CD8-positive, alpha-beta memory T cell (primary cell): ENCODE measurements at regions of chr7 and their contacts with region 1.

Region 1: DNA sequence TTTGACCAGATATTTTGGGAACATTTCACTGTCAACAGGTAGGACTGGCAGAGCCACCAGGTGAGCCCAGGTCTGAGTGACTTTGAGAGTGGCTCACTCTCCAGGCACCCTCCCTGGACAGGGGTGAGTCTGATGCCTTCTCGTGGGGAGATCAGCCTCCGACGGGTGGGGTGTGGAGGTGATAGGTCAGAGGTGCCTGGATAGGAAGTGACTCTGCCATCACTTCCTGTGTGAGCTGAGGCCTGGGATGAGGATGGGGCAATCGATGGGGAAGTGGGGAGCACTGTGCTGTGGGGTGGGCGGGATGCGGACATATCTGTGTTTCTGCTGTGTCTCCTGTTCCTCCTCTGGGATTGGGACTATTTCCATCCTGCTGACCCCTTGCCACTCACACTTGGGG is 34.6 kb downstream of the IFT22 start:
- DNase-seq: no peak
- H3K4me3 ChIP-seq: no peak overlapping the region
- H3K4me3 Mint-ChIP-seq: no peak overlapping the region
- H3K27ac ChIP-seq: no peak overlapping the region
- H3K27ac Mint-ChIP-seq: no peak overlapping the region
- H3K4me1 ChIP-seq: peaks cover 3% of the 10 kb centered on the region
- H3K4me1 Mint-ChIP-seq: peaks cover 21 to 23% (median 22%) of the 10 kb centered on the region in 3 donors
- H3K27me3 ChIP-seq: peaks cover 3% of the 10 kb centered on the region
- H3K27me3 Mint-ChIP-seq: peaks cover 7 to 9% of the 10 kb centered on the region in 2 donors

Region 2: DNA sequence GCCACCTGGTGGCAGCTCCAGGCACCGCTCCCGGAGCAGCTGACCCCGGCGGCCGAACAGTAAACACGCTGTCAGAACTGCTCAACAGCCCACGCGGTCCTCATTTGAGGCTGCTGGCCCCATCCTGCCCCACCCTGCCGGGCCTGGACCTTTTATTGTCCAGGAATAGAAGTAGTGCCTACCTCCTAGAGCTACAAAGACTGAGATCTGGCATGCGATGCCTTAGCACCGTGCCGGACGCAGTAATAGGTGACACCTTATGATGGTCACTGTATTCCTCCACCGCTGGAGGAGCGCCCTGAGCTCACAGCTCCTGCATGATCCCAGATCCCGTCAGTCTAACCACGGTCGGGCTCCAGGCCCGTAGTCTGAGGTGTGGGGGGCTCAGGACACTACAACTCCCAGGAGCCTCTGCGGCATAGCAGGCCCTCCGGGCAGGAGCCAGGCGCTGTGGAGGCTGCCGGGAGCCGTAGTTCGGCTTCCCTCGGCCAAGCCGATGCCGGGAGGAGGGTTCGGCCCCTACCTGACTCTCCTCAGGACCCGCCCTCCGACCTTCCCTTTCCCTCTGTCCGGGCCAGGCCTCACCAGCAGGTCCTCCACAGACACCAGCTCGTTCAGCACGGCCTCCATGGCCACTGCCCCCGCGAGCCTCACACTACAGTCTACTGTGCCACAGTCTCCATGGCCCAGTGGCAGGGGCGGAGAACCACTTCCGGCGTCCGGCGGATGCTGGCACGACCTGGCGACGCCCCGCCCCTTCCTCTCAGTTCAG is 42.5 kb before region 1 on chr7 and contains the start of gene FIS1:
- CTCF ChIA-PET with region 1: interaction called, 15 read pairs
- POLR2A ChIA-PET with region 1: no interaction called
- DNase-seq: peak; percentile 91 to 95 (median 92)
- H3K4me3 ChIP-seq: peak within 1 kb of the TSS; percentile 95
- H3K4me3 Mint-ChIP-seq: peak within 1 kb of the TSS; percentile 97 to 99 (median 98)
- H3K27ac ChIP-seq: peak within 1 kb of the TSS; percentile 91
- H3K27ac Mint-ChIP-seq: peak within 1 kb of the TSS; percentile 93 to 99 (median 97)
- H3K4me1 ChIP-seq: peaks cover 27% of the 10 kb centered on the region
- H3K4me1 Mint-ChIP-seq: peaks cover 30 to 60% (median 40%) of the 10 kb centered on the region in 3 donors
- H3K27me3 ChIP-seq: no peaks in the 10 kb centered on the region
- H3K27me3 Mint-ChIP-seq: peaks cover 0 to 2% of the 10 kb centered on the region in 2 donors
- total RNA-seq, gene FIS1: 137 to 139 TPM

Region 3: DNA sequence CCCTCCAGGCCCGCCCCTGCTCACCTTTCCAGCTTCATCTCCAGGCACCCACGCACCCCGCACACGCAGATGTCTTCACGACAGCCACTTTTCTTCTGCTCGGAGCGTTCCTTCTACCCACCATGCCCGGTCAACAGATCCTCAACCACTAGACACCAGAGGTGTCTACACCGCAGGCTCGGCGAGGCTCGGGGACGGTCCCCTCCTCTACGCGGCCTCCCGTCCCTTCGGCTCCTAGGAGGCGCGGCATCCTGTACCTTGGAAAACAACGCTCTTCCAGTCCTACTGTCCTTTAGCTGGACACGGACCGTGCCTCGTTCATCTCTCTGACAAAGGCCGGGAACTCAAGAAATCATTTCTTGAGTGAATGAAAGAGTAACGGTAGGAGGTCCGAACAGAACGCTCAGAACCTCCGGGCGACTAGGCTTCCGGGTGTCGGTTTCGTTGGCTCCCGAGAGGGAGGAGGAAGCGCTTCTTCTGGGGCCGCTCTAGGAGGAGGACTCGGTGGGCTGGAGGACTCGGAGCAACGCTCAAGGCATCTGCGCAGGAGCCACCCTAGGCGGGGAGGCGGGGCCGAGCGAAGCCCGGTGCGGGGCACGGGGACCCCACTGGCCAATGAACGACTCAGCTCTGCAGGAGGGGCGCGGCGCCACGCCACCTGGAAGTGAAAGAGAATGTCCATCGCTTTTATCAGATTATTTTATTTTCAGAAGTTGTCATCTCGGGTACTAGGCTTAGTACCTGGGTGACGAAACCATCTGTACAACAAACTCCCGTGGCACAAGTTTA is 35.0 kb before region 1 on chr7:
- CTCF ChIA-PET with region 1: interaction called, 10 read pairs
- POLR2A ChIA-PET with region 1: no interaction called
- DNase-seq: peak; percentile 97 to 99 (median 98)
- H3K4me3 ChIP-seq: peak overlapping the region; percentile 100
- H3K4me3 Mint-ChIP-seq: peak overlapping the region; percentile 95 to 100 (median 99)
- H3K27ac ChIP-seq: peak overlapping the region; percentile 80
- H3K27ac Mint-ChIP-seq: peak overlapping the region; percentile 88 to 100 (median 98)
- H3K4me1 ChIP-seq: peaks cover 16% of the 10 kb centered on the region
- H3K4me1 Mint-ChIP-seq: peaks cover 26 to 40% (median 35%) of the 10 kb centered on the region in 3 donors
- H3K27me3 ChIP-seq: no peaks in the 10 kb centered on the region
- H3K27me3 Mint-ChIP-seq: peaks cover 3 to 8% of the 10 kb centered on the region in 2 donors

Region 4: DNA sequence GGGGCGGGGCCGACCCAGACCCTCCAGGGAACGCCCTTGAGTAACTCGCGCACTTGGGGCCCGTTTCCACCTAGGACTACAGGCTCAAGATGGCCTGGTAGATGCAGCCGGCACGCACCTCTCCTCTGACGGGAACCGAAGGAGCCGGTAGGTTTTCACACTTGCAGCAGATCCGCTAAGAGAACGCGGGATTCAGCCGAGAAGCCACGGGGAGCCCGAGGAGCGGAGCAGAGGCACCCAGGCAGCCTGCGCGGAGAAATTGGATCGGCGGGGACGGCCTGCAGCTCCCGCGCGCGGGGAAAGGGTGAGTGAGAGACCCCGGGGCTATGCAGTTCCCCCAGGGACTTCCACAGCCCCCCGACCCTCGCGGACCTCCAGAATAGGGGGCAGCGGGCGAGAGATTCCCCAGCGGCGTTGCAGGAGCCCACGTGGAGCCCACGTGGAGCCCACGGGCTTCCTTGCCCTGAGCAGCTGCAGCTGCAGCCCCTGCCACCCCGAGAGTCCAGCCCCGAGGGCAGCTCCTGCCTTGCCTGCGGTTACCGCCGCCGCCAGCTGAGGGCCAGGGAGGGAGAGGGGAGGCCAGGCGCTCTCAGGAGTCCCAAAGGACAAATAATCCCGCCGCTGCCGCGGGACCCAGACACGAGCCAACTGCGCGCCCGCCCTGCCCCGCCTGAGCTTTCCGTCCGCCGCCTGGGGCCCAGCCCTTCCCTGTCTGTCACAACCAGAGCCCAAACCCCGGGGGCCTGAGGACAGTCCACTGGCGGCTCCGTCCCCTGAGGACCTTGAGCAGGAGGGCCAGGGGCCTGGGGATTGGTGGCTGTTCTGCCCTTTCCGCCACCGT is 21.4 kb after region 1 on chr7:
- CTCF ChIA-PET with region 1: interaction called, 11 read pairs
- POLR2A ChIA-PET with region 1: no interaction called
- DNase-seq: peak in 1 of 5 donors; percentile 20
- H3K4me3 ChIP-seq: peak overlapping the region; percentile 34
- H3K4me3 Mint-ChIP-seq: peak overlapping the region; percentile 6 to 92 (median 84)
- H3K27ac ChIP-seq: no peak overlapping the region
- H3K27ac Mint-ChIP-seq: no peak overlapping the region
- H3K4me1 ChIP-seq: no peaks in the 10 kb centered on the region
- H3K4me1 Mint-ChIP-seq: peaks cover 5 to 6% (median 5%) of the 10 kb centered on the region in 3 donors
- H3K27me3 ChIP-seq: peaks cover 6% of the 10 kb centered on the region
- H3K27me3 Mint-ChIP-seq: peaks cover 38 to 50% of the 10 kb centered on the region in 2 donors

Region 5: DNA sequence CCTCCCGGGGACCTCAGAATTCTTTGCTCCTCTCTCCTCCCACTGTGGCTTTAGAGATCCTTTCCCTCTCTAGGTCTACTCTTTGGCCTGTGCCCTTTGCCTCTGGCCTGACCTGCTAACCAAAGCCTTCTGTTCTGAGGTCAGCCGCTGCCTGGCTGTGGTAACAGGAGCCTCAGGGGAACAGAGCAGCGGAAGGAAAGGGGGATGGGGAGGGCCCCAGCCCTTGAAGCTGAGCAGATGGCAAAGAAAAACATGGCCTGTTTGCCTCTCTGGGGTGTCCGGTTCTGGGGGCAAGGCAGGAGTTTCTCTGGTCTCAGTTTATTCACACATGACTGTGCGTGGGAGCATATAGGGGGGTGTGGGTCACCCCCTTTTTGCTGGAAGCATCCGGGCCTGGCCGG is 103.9 kb after region 1 on chr7:
- CTCF ChIA-PET with region 1: no interaction called
- POLR2A ChIA-PET with region 1: no interaction called
- DNase-seq: peak in 1 of 5 donors; percentile 38
- H3K4me3 ChIP-seq: no peak overlapping the region
- H3K4me3 Mint-ChIP-seq: peak overlapping the region in 3 of 7 donors; percentile 32 to 59 (median 50)
- H3K27ac ChIP-seq: no peak overlapping the region
- H3K27ac Mint-ChIP-seq: peak overlapping the region in 4 of 8 donors; percentile 53 to 84 (median 64)
- H3K4me1 ChIP-seq: peaks cover 24% of the 10 kb centered on the region
- H3K4me1 Mint-ChIP-seq: peaks cover 14 to 17% (median 15%) of the 10 kb centered on the region in 3 donors
- H3K27me3 ChIP-seq: no peaks in the 10 kb centered on the region
- H3K27me3 Mint-ChIP-seq: peaks cover 12 to 16% of the 10 kb centered on the region in 2 donors

Region 6: GRCh38 chr7:101410743-101411507 is 123.9 kb after region 1 on chr7:
- CTCF ChIA-PET with region 1: no interaction called
- POLR2A ChIA-PET with region 1: no interaction called
- DNase-seq: peak in 4 of 5 donors; percentile 7 to 43 (median 14)
- H3K4me3 ChIP-seq: no peak overlapping the region
- H3K4me3 Mint-ChIP-seq: peak overlapping the region in 1 of 7 donors; percentile 35
- H3K27ac ChIP-seq: no peak overlapping the region
- H3K27ac Mint-ChIP-seq: peak overlapping the region in 1 of 8 donors; percentile 21
- H3K4me1 ChIP-seq: no peaks in the 10 kb centered on the region
- H3K4me1 Mint-ChIP-seq: peaks cover 6 to 7% (median 6%) of the 10 kb centered on the region in 3 donors
- H3K27me3 ChIP-seq: no peaks in the 10 kb centered on the region
- H3K27me3 Mint-ChIP-seq: peaks cover 3 to 23% of the 10 kb centered on the region in 2 donors

Region 7: GRCh38 chr7:101795461-101795860 is 508.4 kb after region 1 on chr7:
- CTCF ChIA-PET with region 1: no interaction called
- POLR2A ChIA-PET with region 1: no interaction called
- DNase-seq: no peak
- H3K4me3 ChIP-seq: no peak overlapping the region
- H3K4me3 Mint-ChIP-seq: no peak overlapping the region
- H3K27ac ChIP-seq: no peak overlapping the region
- H3K27ac Mint-ChIP-seq: no peak overlapping the region
- H3K4me1 ChIP-seq: no peaks in the 10 kb centered on the region
- H3K4me1 Mint-ChIP-seq: no peaks in the 10 kb centered on the region
- H3K27me3 ChIP-seq: no peaks in the 10 kb centered on the region
- H3K27me3 Mint-ChIP-seq: peaks cover 5 to 7% of the 10 kb centered on the region in 2 donors